ENCODE measurements at regions of chr1 and their contacts with region 1.

Region 1: DNA sequence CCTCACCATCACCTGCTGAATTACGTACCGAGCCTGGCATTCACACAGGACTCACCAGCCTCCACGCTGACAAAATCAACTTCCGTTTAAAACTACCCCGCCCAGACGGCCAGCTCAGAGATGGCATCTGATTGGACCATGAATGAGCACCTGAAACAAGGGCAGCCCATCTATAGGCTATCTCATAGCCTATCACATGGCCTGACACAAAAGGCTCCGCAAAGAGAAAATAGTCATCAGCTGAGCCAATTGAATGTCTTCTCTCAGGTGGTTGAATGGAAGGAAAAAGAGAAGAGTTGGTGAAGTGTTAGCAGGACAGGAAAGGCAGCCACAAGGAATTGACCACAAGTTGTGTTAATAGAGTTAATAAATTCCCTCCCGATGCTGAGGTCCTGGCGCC is 50.6 kb upstream of the ZC3H12A start:
- DNase-seq: no peak
- H3K4me3 ChIP-seq: no peak overlapping the region
- H3K27ac ChIP-seq: no peak overlapping the region
- H3K4me1 ChIP-seq: no peaks in the 10 kb centered on the region
- H3K27me3 ChIP-seq: peaks cover 0 to 5% (median 0%) of the 10 kb centered on the region in 5 experiments

Region 2: GRCh38 chr1:37434292-37434907 is 10.6 kb after region 1 on chr1:
- CTCF ChIA-PET with region 1: interaction called, 10 read pairs
- POLR2A ChIA-PET with region 1: no interaction called
- DNase-seq: peak; percentile 49 to 71 (median 67)
- H3K4me3 ChIP-seq: no peak overlapping the region
- H3K27ac ChIP-seq: no peak overlapping the region
- H3K4me1 ChIP-seq: no peaks in the 10 kb centered on the region
- H3K27me3 ChIP-seq: peaks cover 2 to 13% (median 6%) of the 10 kb centered on the region in 5 experiments